ENCODE measurements at regions of chr22 and their contacts with region 1.

Region 1: GRCh38 chr22:30289134-30289979 is at the start of gene CASTOR1:
- DNase-seq: peak; percentile 99
- total RNA-seq, gene CASTOR1: 3.4 and 4.0 TPM in 2 replicates

Region 2: DNA sequence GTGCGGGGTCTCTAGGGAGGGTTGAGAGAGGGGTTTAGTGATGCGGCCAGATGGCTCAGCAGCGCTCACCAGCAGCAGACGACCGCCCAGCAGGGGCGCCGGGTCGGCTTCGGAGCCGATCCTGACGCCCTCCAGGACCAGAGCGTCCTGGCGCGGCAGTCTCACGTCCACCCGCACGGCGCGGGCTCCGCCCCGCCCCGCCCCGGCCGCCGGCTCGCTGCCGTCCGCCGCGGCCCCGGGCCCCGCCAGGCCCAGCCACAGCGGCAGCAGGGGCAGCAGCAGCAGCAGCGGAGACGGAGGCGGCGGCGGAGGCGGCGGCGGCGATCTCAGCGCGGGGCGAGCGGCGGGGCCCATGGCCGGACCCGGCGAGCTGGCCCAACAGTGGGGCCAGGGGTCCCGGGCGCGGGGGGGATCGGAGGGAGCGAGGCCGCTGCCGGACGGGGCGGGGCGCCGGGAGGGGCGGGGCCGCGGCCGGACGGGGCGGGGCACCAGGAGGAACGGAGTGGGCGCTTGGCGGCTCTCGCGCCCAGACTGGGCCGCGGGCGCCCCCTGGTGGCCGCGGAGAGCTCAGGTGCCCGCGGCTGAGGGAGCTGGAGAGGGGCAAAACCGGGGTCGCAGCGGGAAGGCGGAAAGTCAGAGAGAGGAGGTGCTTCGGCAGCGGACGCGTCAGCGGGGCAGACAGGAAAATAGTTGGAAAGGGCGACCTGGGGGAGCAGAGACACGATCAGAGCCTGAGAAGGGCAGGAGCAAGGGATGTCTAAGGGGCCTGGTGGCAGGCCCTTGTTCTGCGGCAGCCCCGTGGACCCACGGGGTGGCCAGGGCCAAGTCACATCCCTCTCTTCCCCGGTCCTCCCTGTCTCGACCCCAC is 97.8 kb after region 1 on chr22 and contains the start of gene RNF215:
- in situ Hi-C with region 1: loop called (anchors 25 kb)
- DNase-seq: peak; percentile 80
- total RNA-seq, gene RNF215: 12.2 and 14.2 TPM in 2 replicates